ENCODE measurements at regions of chr20 and their contacts with region 1.

Region 1: DNA sequence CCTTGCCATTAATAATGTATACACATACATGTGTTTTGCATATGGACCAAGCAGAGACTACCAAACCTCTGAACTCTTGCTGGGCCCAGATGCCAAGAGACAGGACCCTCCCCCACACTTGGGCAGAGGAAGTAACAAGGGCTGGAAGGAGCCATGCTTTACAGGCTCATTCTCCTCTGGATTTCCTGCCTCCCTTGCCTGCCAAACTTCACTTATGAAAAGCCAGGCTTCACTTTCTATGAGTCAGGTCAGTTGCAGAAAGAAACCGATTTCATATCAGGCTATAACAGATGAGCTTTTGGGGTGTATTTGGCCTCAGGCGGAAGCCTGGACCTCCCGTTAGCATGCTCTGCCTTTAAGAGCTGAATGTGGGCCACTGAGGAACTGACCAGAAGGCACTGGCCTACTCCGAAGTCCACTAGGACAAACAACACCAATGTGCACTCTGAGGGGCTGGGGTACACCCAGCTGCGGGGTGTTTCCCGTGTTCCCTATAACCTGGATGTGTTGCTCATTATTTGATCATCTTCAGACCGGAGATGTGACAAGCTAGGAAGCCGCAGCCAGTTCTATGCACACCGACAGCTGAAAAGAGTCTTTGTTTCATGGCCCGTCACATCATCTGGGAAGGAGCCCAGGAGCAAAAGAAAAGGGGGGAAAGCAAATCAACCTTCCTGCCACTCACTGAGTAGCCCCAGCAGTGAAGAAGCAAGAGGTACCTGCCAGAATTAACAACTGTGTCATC is 28.5 kb downstream of the HAO1 start:
- DNase-seq: no peak
- H3K4me3 ChIP-seq: no peak overlapping the region
- H3K27ac ChIP-seq: no peak overlapping the region
- H3K4me1 ChIP-seq: no peaks in the 10 kb centered on the region
- H3K27me3 ChIP-seq: no peaks in the 10 kb centered on the region
- CTCF ChIP-seq: no peak
- EP300 ChIP-seq: no peak
- POLR2A ChIP-seq: no peak

Region 2: DNA sequence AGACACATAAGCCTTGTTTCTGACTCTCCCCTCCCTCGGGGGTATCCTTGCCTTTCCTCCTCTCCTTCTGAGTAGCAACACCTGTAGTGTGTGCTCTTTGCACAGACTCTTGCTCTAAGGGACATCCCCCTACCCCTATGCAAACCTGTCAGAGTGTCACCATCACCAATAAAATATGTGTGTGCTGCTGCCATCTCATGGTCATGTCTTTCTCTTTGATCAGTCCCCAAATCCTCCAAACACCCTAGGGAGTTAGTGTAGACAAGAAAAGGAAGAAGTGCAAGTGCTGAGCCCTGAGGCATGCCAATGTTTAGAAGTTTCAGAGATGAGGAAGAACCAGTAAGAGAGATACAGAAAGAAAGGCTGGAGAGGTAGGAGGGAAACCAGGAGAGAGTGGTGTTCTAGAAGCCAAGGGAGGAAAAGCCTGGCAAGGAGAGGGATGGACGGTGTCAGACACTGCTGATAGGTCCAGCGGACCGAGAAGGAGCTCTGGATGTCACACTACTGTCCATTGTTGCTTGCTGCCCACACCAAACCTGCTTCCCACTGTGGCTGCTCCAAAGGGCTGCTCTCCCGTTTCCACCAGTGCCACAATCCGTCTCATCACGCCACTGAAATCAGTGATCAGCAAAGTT is 1977.8 kb before region 1 on chr20:
- intact Hi-C with region 1: loop called in 1 of 4 experiments (anchors 5 kb)
- DNase-seq: no peak
- H3K4me3 ChIP-seq: no peak overlapping the region
- H3K27ac ChIP-seq: no peak overlapping the region
- H3K4me1 ChIP-seq: no peaks in the 10 kb centered on the region
- H3K27me3 ChIP-seq: no peaks in the 10 kb centered on the region
- CTCF ChIP-seq: no peak
- EP300 ChIP-seq: no peak
- POLR2A ChIP-seq: no peak

Region 3: DNA sequence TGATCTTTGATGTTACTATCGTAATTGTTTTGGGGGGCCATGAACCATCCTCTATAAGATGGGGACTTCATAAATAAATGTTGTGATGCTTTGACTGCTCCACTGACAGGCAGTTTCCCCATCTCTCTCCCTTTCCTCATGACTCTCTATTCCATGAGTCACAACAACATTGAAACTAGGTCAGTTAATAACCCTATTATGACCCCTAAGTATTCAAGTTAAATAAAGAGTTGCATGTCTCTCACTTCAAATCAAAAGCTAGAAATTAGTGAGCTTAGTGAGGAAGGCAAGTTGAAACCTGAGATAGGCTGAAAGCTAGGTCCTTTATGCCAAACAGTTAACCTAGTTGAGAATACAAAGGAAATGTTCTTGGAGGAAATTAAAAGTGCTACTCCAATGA is 462.5 kb before region 1 on chr20:
- intact Hi-C with region 1: no loop called
- DNase-seq: no peak
- H3K4me3 ChIP-seq: no peak overlapping the region
- H3K27ac ChIP-seq: no peak overlapping the region
- H3K4me1 ChIP-seq: no peaks in the 10 kb centered on the region
- H3K27me3 ChIP-seq: no peaks in the 10 kb centered on the region
- CTCF ChIP-seq: no peak
- EP300 ChIP-seq: no peak
- POLR2A ChIP-seq: no peak

Region 4: DNA sequence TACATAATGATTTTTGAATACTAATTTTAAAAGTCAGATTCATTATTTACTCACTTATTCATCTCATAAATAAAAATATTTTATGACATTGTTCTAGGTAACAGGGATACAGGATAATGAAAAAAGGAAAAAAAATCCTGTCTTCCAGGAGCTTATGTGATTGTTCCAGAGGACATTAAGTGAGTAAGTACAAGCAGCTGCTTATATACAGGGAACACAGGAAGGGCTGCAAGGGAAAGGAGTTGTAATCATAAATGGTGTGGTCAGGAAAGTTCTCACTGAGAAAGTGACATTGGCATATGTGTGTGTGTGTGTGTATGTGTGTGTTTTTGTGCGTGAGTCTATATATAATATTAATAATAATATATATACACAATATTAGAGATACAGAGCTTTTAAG is 93.3 kb before region 1 on chr20:
- intact Hi-C with region 1: no loop called
- DNase-seq: no peak
- H3K4me3 ChIP-seq: no peak overlapping the region
- H3K27ac ChIP-seq: no peak overlapping the region
- H3K4me1 ChIP-seq: no peaks in the 10 kb centered on the region
- H3K27me3 ChIP-seq: no peaks in the 10 kb centered on the region
- CTCF ChIP-seq: no peak
- EP300 ChIP-seq: no peak
- POLR2A ChIP-seq: no peak